ENCODE measurements at regions of chr6 and their contacts with region 1.

Region 1: DNA sequence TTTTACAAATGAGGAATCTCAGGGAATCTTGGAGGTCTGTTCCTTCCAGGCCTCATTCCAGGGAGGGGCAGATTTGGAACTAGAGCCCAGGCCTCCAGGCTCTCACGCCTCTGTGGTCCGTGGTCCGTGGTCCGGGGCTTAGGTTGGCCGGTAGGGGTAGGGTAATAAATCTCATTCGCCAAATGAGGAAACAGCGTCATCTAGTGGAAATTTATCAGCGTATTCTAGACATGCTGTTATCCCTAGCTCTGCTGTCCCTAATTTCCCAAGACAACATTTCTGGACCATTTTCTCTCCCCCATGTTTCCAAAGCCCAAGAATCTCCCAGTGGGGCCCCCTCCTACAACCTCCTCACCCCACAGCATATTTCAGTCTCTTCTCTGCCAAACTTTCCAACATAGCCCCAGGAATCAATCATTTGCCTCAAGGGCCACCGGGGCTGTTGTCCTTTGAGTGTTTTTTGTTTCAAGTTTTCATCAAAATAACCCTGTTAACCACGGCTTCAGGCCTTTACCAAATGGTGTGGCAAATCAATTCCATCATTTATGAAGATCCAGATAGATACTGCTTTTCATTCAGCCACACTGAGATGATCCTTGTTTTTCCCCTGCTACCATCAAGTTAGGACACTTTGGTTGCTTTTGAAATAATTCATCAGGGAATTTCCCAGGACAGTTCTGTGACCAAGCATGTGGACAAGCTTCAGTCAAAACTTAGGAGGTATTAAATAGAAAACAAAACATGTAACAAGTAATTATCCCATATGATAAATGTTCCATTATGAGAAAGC is 126.8 kb downstream of the ALDH8A1 start:
- DNase-seq: peak; percentile 39 to 74 (median 53)
- ATAC-seq: peak; percentile 91
- H3K4me3 ChIP-seq: no peak overlapping the region
- H3K27ac ChIP-seq: no peak overlapping the region
- H3K4me1 ChIP-seq: peaks cover 12% of the 10 kb centered on the region
- H3K27me3 ChIP-seq: no peaks in the 10 kb centered on the region
- CTCF ChIP-seq: peak; percentile 72 to 100 (median 98)
- POLR2A ChIP-seq: no peak

Region 2: GRCh38 chr6:134152767-134153485 is 670.2 kb before region 1 on chr6:
- intact Hi-C with region 1: loop called (anchors 5 kb)
- DNase-seq: peak in 2 of 4 donors; percentile 20 to 40
- ATAC-seq: peak; percentile 72
- H3K4me3 ChIP-seq: no peak overlapping the region
- H3K27ac ChIP-seq: peak overlapping the region in 2 of 4 donors; percentile 14 to 31
- H3K4me1 ChIP-seq: peaks cover 15% of the 10 kb centered on the region
- H3K27me3 ChIP-seq: no peaks in the 10 kb centered on the region
- CTCF ChIP-seq: no peak
- POLR2A ChIP-seq: no peak

Region 3: GRCh38 chr6:134967711-134968110 is 144.6 kb after region 1 on chr6:
- intact Hi-C with region 1: no loop called
- DNase-seq: no peak
- ATAC-seq: no peak
- H3K4me3 ChIP-seq: no peak overlapping the region
- H3K27ac ChIP-seq: no peak overlapping the region
- H3K4me1 ChIP-seq: no peaks in the 10 kb centered on the region
- H3K27me3 ChIP-seq: no peaks in the 10 kb centered on the region
- CTCF ChIP-seq: no peak
- POLR2A ChIP-seq: no peak

Region 4: GRCh38 chr6:135346747-135347146 is 523.6 kb after region 1 on chr6:
- intact Hi-C with region 1: no loop called
- DNase-seq: no peak
- ATAC-seq: no peak
- H3K4me3 ChIP-seq: no peak overlapping the region
- H3K27ac ChIP-seq: no peak overlapping the region
- H3K4me1 ChIP-seq: no peaks in the 10 kb centered on the region
- H3K27me3 ChIP-seq: no peaks in the 10 kb centered on the region
- CTCF ChIP-seq: no peak
- POLR2A ChIP-seq: no peak